HCT116 (cell line): ENCODE measurements at regions of chr13 and their contacts with region 1.

Region 1: GRCh38 chr13:30132623-30133553 is 174.5 kb downstream of the KATNAL1 start:
- DNase-seq: peak; percentile 78
- ATAC-seq: peak; percentile 100
- H3K4me3 ChIP-seq: no peak overlapping the region
- H3K27ac ChIP-seq: no peak overlapping the region; the same call in 1 of the 2 replicates
- H3K4me1 ChIP-seq: peaks cover 0 to 7% of the 10 kb centered on the region in 2 experiments; a peak in 2 of 4 replicates
- H3K27me3 ChIP-seq: no peaks in the 10 kb centered on the region
- CTCF ChIP-seq: peak; percentile 85 to 91 (median 88)
- POLR2A ChIP-seq: no peak
- RAD21 ChIP-seq: peak; percentile 94

Region 2: GRCh38 chr13:30033681-30034457 is 99.0 kb before region 1 on chr13:
- CTCF ChIA-PET with region 1: no interaction called
- POLR2A ChIA-PET with region 1: no interaction called
- RAD21 ChIA-PET with region 1: no interaction called
- intact Hi-C with region 1: no loop called
- DNase-seq: no peak
- ATAC-seq: no peak
- H3K4me3 ChIP-seq: no peak overlapping the region
- H3K27ac ChIP-seq: no peak overlapping the region
- H3K4me1 ChIP-seq: no peaks in the 10 kb centered on the region
- H3K27me3 ChIP-seq: peaks cover 42% of the 10 kb centered on the region
- CTCF ChIP-seq: no peak
- POLR2A ChIP-seq: no peak
- RAD21 ChIP-seq: no peak

Region 3: GRCh38 chr13:30114571-30115256 is 18.2 kb before region 1 on chr13:
- CTCF ChIA-PET with region 1: interaction called, 16 read pairs
- POLR2A ChIA-PET with region 1: interaction called, 4 read pairs
- RAD21 ChIA-PET with region 1: interaction called, 4 read pairs
- intact Hi-C with region 1: no loop called
- DNase-seq: peak; percentile 72
- ATAC-seq: peak; percentile 93
- H3K4me3 ChIP-seq: peak overlapping the region; percentile 44 to 54
- H3K27ac ChIP-seq: peak overlapping the region; percentile 59; the same call in 1 of the 2 replicates
- H3K4me1 ChIP-seq: peaks cover 12 to 25% of the 10 kb centered on the region in 2 experiments
- H3K27me3 ChIP-seq: no peaks in the 10 kb centered on the region; the same call in 1 of the 2 replicates
- CTCF ChIP-seq: peak; percentile 87 to 94 (median 91)
- POLR2A ChIP-seq: peak; percentile 75
- RAD21 ChIP-seq: peak; percentile 85

Region 4: DNA sequence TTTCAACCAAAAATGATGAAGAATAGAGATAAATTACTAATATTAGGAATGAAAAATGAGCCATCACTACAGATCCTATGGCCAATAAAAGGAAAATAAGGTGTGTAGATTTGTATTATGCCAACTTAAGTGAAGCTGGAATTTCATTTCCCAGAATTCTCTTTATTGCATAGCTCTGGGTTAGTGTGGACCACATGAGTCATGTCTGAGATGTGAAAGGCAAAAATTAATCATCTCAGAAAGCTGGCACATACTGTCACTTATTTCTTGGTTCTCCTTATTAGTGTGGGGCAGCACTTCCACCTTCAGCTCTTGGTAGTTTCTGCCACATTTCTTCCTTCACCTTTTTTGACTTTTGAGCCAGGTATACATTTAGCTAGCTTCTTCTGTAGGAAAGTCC is 91.8 kb after region 1 on chr13:
- CTCF ChIA-PET with region 1: no interaction called
- POLR2A ChIA-PET with region 1: no interaction called
- RAD21 ChIA-PET with region 1: no interaction called
- intact Hi-C with region 1: no loop called
- DNase-seq: peak; percentile 54
- ATAC-seq: peak; percentile 87
- H3K4me3 ChIP-seq: 0 out of 4 replicates have a peak overlapping the region, but pooled peaks of 1 of the 2 experiments have one; percentile 15
- H3K27ac ChIP-seq: peak overlapping the region; percentile 61; the same call in 1 of the 2 replicates
- H3K4me1 ChIP-seq: peaks cover 15 to 22% of the 10 kb centered on the region in 2 experiments
- H3K27me3 ChIP-seq: no peaks in the 10 kb centered on the region
- CTCF ChIP-seq: no peak
- POLR2A ChIP-seq: no peak
- RAD21 ChIP-seq: no peak

Region 5: DNA sequence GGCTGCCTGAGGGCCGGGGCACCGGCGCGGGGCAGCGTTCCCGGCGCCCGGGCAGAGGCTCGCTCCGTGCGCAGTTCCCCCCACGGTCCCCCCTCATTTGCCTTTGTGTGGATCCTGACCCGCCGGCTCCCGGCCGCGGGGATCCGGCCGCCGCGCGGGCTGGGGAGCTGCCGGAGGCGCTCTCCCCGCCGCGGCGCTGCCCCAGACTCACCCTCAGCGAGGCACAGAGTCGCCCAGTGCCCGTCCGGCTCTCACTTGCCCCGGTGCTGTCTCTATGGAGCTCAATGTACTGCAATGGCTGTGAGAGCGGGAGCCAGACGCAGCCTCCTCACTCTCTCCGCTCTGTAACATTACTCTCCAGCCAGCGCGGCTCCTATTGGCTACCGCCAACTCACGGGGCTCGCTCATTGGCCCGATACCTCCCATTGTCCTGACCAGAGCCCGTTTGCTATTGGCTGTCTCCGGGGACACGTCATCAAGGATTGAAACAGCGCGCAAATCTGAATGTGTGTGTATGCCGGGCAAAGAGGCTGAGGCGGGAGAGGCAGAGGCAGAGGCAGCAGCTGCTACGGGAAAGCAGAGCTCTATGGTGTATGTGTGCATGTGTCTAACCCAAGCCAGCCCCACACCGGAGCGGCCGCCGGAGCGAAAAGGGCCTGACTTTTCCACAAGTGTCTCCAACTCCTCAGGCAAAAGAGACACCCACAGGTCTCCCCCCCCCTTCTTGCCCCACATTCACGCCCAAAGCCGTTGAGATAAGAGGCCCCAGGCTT is 332.9 kb after region 1 on chr13 and contains the start of gene HMGB1:
- CTCF ChIA-PET with region 1: interaction called, 8 read pairs
- POLR2A ChIA-PET with region 1: no interaction called
- RAD21 ChIA-PET with region 1: no interaction called
- intact Hi-C with region 1: loop called (anchors 1 kb)
- DNase-seq: peak; percentile 98
- ATAC-seq: peak; percentile 90
- H3K4me3 ChIP-seq: peak within 1 kb of the TSS; percentile 73 to 80
- H3K27ac ChIP-seq: peak within 1 kb of the TSS; percentile 99
- H3K4me1 ChIP-seq: peaks cover 11 to 32% of the 10 kb centered on the region in 2 experiments; a peak in 3 of 4 replicates
- H3K27me3 ChIP-seq: no peaks in the 10 kb centered on the region
- CTCF ChIP-seq: no peak
- POLR2A ChIP-seq: peak; percentile 77
- RAD21 ChIP-seq: no peak
- total RNA-seq, gene HMGB1: 678 TPM

Region 6: DNA sequence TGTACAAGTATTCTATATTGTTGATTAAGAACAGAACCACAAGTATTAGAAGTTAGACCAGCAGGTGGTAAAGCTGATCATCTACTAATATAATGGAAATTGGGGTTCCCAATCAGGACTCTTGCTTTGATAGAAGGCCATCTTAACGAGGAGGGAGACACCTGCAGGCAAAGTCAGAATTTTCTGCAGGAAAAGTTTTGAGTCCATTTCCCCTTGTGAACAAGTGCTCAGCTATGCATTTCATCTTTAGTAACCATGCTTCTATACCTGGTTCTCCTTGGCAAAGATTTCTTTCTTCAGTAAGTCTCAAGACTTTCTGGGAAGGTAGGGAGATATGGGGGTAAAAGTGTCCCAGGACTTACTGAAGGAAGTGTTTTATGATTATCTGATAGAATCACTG is 448.7 kb after region 1 on chr13:
- CTCF ChIA-PET with region 1: interaction called, 22 read pairs
- POLR2A ChIA-PET with region 1: interaction called, 3 read pairs
- RAD21 ChIA-PET with region 1: interaction called in 1 of 2 experiments, 4 read pairs
- intact Hi-C with region 1: loop called (anchors 10 kb)
- DNase-seq: peak; percentile 29
- ATAC-seq: peak; percentile 52; the same call in 1 of the 2 replicates
- H3K4me3 ChIP-seq: no peak overlapping the region
- H3K27ac ChIP-seq: no peak overlapping the region
- H3K4me1 ChIP-seq: peaks cover 25 to 29% of the 10 kb centered on the region in 2 experiments
- H3K27me3 ChIP-seq: no peaks in the 10 kb centered on the region
- CTCF ChIP-seq: peak; percentile 33 to 62 (median 49); a peak in 5 of 6 replicates
- POLR2A ChIP-seq: no peak
- RAD21 ChIP-seq: peak; percentile 64

Region 7: DNA sequence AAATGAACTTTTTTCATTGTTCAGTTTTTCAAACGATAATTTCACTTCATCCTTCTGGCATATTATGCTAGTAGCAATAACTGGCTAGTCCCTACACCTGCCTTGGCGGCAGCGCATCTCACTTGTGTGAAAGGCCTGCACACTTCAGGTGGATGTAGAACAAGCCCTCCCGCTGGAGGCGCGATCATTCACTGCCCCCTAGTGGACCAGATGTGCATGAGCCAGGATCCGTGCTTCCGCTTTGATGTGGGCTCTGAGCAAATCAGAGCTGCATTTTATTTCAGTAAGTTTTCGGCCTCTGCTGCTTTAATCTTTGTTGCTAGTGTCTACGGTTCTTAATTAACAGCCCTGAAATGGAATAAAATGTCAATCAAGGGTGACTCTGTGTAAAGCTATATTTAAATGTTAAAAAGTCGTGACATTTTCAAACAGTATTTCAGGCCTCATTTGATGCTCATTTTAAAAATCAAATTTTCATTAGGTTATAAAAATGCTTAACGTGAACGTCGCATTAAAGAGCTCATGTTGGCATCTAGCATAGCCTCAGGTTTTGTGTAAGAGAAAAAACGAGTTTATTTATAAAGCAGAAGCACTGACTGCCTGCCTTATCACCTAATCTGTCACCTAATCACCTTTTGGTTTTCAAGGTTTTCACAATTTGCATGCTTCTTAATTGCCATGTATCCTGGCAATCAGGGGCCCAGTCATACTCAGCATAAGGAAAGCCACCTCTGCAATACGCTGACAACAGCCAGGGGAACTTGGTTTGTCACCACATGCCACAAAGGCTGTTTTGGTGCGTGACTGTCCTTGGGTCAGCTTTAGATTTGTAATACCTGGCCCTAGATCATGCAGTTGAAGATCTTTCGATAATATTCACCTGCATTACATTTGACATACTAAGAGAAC is 911.7 kb after region 1 on chr13:
- CTCF ChIA-PET with region 1: interaction called, 5 read pairs
- POLR2A ChIA-PET with region 1: no interaction called
- RAD21 ChIA-PET with region 1: no interaction called
- intact Hi-C with region 1: loop called (anchors 1 kb)
- DNase-seq: peak; percentile 78
- ATAC-seq: peak; percentile 75
- H3K4me3 ChIP-seq: peak overlapping the region in 1 of 2 experiments; percentile 56; a peak in 3 of 4 replicates
- H3K27ac ChIP-seq: peak overlapping the region; percentile 98
- H3K4me1 ChIP-seq: peaks cover 28 to 55% of the 10 kb centered on the region in 2 experiments
- H3K27me3 ChIP-seq: no peaks in the 10 kb centered on the region
- CTCF ChIP-seq: peak in 2 of 3 experiments; percentile 95 to 97; a peak in 4 of 6 replicates
- POLR2A ChIP-seq: no peak
- RAD21 ChIP-seq: no peak